ENCODE measurements at regions of chr9 and their contacts with region 1.

Region 1: DNA sequence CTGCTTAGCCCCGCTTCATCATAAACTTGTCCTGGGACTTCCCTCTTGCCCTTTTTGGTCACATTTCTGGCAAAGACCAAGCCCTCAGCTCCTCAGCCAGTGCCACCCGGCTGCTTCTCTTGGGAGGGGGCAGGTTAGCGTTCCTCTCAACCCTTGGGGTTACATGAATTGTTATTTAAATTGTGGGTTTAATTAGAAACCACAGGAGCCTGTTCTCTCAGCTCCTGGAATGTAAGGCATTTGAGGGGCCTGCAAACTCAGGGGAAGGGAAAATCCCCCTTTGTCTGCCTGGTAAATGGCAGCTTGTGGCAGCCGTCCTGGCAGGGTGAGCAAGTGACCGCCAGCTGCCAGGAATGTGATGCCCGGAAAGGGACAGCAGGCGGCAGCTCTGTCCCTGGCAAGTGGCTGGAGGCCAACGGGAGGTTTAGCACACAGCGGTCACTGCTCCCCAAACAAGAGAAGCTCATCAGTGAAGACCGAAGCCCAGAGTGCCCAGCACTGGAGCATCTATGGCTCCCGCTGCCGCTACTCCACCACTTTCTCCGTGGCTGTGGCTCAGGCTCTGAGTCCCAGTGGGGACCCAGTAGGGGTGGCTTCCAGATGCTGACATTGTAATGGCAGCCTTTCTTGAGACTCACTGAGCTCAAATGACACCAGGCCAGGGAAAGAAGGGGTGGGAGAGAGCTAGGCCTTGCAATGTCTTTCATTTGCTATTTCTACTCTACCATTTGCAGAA is 51.7 kb downstream of the SHB start:
- DNase-seq: peak; percentile 72 to 86 (median 82)
- ATAC-seq: peak; percentile 76
- H3K4me3 ChIP-seq: no peak overlapping the region
- H3K27ac ChIP-seq: peak overlapping the region; percentile 33 to 80 (median 72)
- H3K4me1 ChIP-seq: peaks cover 53% of the 10 kb centered on the region
- H3K27me3 ChIP-seq: no peaks in the 10 kb centered on the region
- CTCF ChIP-seq: peak; percentile 16 to 76 (median 65)
- POLR2A ChIP-seq: peak in 1 of 3 donors; percentile 4

Region 2: DNA sequence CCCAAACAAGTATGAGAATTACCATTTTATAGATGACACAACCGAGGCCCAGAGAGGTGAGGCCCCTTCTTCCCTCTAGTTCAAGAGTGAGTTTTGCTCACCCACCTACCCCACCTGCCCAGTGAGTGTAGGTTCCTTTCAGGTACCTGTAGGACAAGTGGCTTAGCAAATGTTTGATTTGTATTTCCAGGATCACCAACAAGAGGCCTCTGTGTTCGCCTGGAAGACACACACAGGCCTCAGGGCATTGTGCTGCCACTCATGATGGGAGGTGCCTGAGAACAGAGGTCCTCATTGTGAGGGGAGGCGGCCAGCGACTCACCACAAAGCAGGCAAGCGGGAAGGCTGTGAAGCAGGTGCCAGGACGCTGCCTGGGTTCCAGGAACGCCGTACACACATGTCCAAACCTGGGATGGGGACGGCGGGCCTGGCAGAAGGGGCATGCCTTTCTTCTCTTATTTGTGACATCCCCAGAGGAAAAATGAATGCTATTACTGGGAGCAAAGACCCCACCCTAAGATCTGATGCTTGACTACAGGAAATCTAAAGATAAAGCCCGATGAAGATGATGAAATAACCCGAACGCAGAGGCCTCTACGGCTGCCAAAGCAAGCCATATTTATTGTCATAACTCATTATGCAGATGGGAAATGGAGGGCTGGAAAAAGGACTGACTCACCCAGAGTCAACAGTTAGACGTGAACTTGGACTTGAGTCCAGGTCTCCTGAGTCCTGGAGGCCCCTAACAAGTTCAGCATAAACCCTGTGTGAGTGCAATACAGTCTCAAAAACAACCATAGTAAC is 53.2 kb before region 1 on chr9:
- intact Hi-C with region 1: loop called (anchors 10 kb)
- DNase-seq: peak; percentile 71 to 89 (median 82)
- ATAC-seq: peak; percentile 64
- H3K4me3 ChIP-seq: no peak overlapping the region
- H3K27ac ChIP-seq: peak overlapping the region; percentile 94 to 99 (median 97)
- H3K4me1 ChIP-seq: peaks cover 77% of the 10 kb centered on the region
- H3K27me3 ChIP-seq: no peaks in the 10 kb centered on the region
- CTCF ChIP-seq: no peak
- POLR2A ChIP-seq: peak in 2 of 3 donors; percentile 51

Region 3: GRCh38 chr9:38068866-38069629 is 51.7 kb after region 1 on chr9 and contains the start of gene SHB:
- intact Hi-C with region 1: loop called (anchors 10 kb)
- DNase-seq: peak; percentile 87 to 91 (median 88)
- ATAC-seq: peak; percentile 80
- H3K4me3 ChIP-seq: peak within 1 kb of the TSS; percentile 85 to 98
- H3K27ac ChIP-seq: peak within 1 kb of the TSS; percentile 98 to 99 (median 98)
- H3K4me1 ChIP-seq: peaks cover 33% of the 10 kb centered on the region
- H3K27me3 ChIP-seq: no peaks in the 10 kb centered on the region
- CTCF ChIP-seq: peak in 3 of 7 experiments; percentile 24 to 52 (median 48)
- POLR2A ChIP-seq: peak; percentile 79 to 96 (median 79)
- total RNA-seq, gene SHB: 25.2 to 29.3 TPM

Measured in body of pancreas (tissue), 4 donors.